Activated CD8-positive, alpha-beta memory T cell treated with anti-CD3 and anti-CD28 coated beads, Interleukin-2, amount 10 ng/mL, durations not matched to agents 7 days and 5 days (primary cell): ENCODE measurements at regions of chr17 and their contacts with region 1.

Region 1: DNA sequence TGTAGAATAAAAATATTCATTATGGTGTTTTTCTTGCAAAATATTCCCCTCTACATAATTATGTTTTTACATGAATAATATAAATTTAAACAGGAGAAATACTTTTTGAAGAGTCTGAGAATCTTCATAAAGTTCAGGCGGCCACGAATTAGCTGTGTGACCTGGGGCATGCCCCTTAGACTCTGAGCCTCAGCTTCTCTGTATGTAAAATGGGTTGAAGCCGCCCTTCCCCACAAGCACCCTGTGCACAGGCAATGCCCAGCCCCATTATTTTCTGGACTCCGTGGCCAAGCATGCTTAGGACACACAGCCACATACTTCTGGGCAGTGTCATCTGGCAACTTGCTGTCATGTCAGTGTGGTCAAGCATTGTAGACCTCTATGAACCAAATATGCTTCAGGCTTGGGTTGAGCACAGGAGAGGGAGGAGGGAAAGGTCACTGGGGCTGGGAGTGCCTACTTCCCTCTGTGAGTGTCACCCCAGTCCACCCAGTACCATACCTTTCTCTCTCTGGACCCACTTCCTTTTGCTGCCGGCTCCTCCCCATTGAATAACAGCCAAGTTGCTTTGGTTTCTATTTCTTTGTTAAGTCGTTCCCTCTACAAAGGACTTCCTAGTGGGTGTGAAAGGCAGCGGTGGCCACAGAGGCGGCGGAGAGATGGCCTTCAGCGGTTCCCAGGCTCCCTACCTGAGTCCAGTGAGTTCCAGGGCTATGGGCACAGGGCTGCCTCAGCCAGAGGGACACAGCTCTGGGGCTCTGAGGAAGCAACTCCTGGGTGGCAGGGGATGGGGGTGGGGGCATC is at the start of gene LGALS9:
- DNase-seq: peak; percentile 72
- ATAC-seq: peak; percentile 84
- H3K4me3 Mint-ChIP-seq: peak within 1 kb of the TSS; percentile 93
- H3K27ac Mint-ChIP-seq: peak within 1 kb of the TSS; percentile 94
- H3K4me1 Mint-ChIP-seq: peaks cover 68% of the 10 kb centered on the region
- H3K27me3 Mint-ChIP-seq: no peaks in the 10 kb centered on the region
- total RNA-seq, gene LGALS9: 150 to 305 TPM

Region 2: GRCh38 chr17:27609611-27610303 is 21.1 kb before region 1 on chr17:
- CTCF ChIA-PET with region 1: interaction called, 32 read pairs
- DNase-seq: peak; percentile 48
- ATAC-seq: peak; percentile 60
- H3K4me3 Mint-ChIP-seq: no peak overlapping the region
- H3K27ac Mint-ChIP-seq: no peak overlapping the region
- H3K4me1 Mint-ChIP-seq: peaks cover 17% of the 10 kb centered on the region
- H3K27me3 Mint-ChIP-seq: no peaks in the 10 kb centered on the region